Right lobe of liver (tissue), 6 donors: ENCODE measurements at regions of chr17 and their contacts with region 1.

Region 1: GRCh38 chr17:29148790-29149430 is 31.3 kb downstream of the MYO18A start:
- DNase-seq: peak; percentile 94 to 96 (median 95)
- ATAC-seq: peak; percentile 91 to 98 (median 94)
- H3K4me3 ChIP-seq: peak overlapping the region; percentile 22 to 53 (median 33)
- H3K27ac ChIP-seq: peak overlapping the region; percentile 23 to 53 (median 52)
- H3K4me1 ChIP-seq: peaks cover 0 to 69% (median 17%) of the 10 kb centered on the region in 4 donors
- H3K27me3 ChIP-seq: no peaks in the 10 kb centered on the region
- CTCF ChIP-seq: peak; percentile 99
- POLR2A ChIP-seq: peak; percentile 46

Region 2: DNA sequence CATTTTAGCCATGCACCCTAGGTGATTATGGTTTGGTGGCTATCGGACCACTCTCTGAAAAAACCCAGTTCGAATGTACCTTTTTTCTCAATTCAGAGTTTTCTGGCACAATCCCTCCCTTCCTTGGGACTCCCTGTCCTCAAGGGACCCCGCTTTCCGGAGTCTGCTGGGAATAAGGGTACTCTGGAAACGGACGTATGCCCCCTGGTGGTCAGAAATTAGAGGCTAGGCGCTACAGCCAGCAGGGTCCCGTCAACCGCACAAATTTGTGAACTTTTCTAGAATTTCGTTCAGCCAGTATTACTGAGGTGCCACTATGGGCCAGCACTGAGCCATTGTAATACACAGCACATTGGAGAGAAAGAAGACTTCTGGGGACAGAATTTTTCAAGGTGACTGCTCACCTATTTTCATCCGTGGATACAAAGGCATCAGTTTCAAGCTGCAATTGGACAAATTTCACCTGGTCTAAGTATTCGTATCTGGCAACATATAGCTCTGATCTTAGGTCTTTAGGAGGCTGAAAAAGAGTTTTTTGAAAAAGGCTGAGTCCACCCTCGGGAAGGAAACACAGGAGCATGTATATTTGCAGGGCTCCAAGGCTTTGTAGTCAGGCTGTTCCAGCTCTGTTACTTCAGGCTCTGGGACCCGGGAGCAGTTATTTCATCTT is 70.6 kb after region 1 on chr17:
- intact Hi-C with region 1: loop called (anchors 5 to 10 kb)
- DNase-seq: peak; percentile 67 to 86 (median 74)
- ATAC-seq: peak; percentile 98 to 100 (median 99)
- H3K4me3 ChIP-seq: no peak overlapping the region
- H3K27ac ChIP-seq: no peak overlapping the region
- H3K4me1 ChIP-seq: peaks cover 0 to 4% (median 0%) of the 10 kb centered on the region in 4 donors
- H3K27me3 ChIP-seq: no peaks in the 10 kb centered on the region
- CTCF ChIP-seq: peak; percentile 92 to 98 (median 97)
- POLR2A ChIP-seq: no peak

Region 3: DNA sequence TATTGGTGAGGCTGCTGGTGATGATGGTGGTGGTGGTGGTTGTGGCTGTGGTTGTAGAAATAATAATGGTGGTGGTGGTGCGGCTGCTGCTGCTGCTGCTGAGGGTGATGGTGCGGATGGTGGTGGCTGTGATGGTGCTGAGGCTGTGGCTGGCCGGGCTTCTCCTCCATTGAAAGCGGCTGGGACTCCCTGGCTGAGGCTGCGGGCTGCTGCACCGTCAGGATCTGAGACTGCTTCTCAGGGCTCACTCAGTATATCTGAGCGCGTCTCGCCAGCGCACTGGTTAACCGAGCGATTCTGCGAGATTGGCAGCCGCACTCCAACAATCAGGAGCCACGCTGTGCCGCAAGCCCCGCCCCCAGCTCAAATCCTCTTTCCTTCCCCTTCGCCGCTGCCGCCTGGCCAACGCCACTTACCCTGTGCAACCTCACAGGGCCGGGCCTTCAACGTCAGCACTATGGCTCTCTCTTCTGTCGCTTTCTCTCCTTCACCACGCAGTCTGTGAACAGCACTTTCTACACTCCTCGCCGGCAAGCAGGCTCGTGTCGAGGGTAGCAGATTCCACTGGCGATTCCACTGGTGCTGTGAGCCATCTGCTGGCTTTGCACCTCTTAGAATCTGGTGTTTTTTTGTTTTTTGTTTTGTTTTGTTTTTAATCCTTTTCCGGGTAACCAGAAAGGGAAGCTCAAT is 145.1 kb after region 1 on chr17 and contains the start of gene NUFIP2:
- intact Hi-C with region 1: loop called in 1 of 2 experiments (anchors 5 kb)
- DNase-seq: peak; percentile 99 to 100 (median 99)
- ATAC-seq: peak; percentile 88 to 97 (median 93)
- H3K4me3 ChIP-seq: peak within 1 kb of the TSS; percentile 90 to 94 (median 90)
- H3K27ac ChIP-seq: peak within 1 kb of the TSS; percentile 94 to 100 (median 97)
- H3K4me1 ChIP-seq: peaks cover 0 to 32% (median 16%) of the 10 kb centered on the region in 4 donors
- H3K27me3 ChIP-seq: no peaks in the 10 kb centered on the region
- CTCF ChIP-seq: no peak
- POLR2A ChIP-seq: peak; percentile 100
- total RNA-seq, gene NUFIP2: 16.1 to 31.2 (median 22.5) TPM